Transverse colon (tissue), 4 donors: ENCODE measurements at regions of chr18 and their contacts with region 1.

Region 1: DNA sequence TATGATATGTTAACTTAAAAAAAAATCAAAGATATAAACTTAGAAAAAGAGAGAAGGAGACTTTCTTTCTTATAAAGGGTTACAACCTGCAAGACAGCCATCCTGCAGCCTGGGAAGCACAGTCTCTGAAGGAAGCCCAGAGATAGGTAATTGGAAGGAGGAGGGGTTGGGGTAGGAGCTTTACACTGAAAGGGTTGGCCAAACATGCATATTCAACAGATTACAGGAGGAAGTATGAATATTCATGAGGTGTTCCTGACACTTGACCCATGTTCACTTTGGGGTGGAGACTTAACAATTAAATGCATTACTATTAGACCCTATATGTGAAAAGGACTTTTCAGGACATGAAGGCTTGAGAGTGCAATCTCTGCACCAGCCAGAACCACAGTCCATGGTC is 71.7 kb upstream of the CDH2 start:
- DNase-seq: no peak
- H3K4me3 ChIP-seq: no peak overlapping the region
- H3K27ac ChIP-seq: no peak overlapping the region
- H3K4me1 ChIP-seq: no peaks in the 10 kb centered on the region
- H3K27me3 ChIP-seq: no peaks in the 10 kb centered on the region
- CTCF ChIP-seq: no peak
- EP300 ChIP-seq: no peak
- POLR2A ChIP-seq: no peak

Region 2: DNA sequence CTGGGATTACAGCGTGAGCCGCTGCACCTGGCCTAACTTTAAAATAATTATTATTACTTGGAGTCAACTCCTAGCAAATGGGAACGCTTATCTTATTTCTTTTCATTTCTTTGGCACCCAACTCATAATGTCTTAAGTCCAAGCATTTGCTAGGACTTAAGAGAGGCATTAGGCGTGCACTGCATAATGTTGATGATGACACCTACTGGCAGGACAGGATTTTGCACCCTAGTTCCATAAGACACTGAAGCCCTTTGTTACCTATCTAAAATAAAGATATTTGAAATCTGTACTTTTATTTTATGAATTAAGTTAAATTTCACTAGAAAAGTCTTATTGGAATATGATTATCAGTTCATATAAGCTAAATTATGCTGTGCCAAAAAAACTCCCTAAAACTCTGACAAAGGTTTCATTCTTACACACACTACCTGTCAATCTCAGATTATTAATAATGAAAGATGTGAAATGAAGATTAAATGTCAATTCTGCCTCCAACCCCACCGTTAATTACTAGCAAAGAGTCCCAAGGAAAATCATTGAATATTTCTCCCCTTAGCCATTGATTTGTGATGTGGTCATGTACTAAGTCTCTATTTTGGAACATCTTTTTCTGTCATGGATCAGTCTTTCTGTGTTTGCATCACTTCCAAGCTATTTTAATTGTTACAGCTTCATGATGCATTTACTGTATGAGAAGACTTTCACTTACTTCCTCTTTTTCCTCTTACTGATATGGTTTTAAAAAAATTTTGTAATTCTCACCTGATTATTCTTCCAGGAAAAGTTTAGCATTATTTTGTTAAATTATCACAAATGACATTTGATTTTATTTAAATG is 59.0 kb before region 1 on chr18:
- in situ Hi-C with region 1: no loop called
- intact Hi-C with region 1: no loop called
- DNase-seq: no peak
- H3K4me3 ChIP-seq: no peak overlapping the region
- H3K27ac ChIP-seq: no peak overlapping the region
- H3K4me1 ChIP-seq: no peaks in the 10 kb centered on the region
- H3K27me3 ChIP-seq: no peaks in the 10 kb centered on the region
- CTCF ChIP-seq: peak; percentile 16 to 56 (median 41)
- EP300 ChIP-seq: no peak
- POLR2A ChIP-seq: no peak

Region 3: DNA sequence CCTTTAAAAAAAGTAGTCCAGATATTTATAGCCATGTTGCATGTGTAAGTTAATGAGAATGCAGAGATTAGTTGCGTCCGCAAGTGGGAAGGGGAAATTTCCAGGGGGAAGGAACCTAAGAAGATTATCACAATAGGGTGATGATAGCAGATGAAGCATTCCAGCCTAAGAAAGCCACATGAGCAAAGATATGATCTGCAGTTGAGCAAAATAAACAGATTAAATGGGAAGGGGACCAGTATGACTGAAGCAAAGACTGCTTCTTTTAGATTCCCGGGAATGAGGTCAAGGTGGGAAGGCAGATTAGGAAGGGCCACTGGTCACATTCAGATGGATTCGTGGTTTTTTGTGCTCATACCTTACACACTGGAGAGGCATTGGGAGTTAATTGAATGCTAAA is 82.9 kb after region 1 on chr18:
- in situ Hi-C with region 1: loop called in 2 of 4 experiments (anchors 25 kb)
- intact Hi-C with region 1: no loop called
- DNase-seq: no peak
- H3K4me3 ChIP-seq: no peak overlapping the region
- H3K27ac ChIP-seq: no peak overlapping the region
- H3K4me1 ChIP-seq: no peaks in the 10 kb centered on the region
- H3K27me3 ChIP-seq: no peaks in the 10 kb centered on the region
- CTCF ChIP-seq: no peak
- EP300 ChIP-seq: no peak
- POLR2A ChIP-seq: no peak

Region 4: DNA sequence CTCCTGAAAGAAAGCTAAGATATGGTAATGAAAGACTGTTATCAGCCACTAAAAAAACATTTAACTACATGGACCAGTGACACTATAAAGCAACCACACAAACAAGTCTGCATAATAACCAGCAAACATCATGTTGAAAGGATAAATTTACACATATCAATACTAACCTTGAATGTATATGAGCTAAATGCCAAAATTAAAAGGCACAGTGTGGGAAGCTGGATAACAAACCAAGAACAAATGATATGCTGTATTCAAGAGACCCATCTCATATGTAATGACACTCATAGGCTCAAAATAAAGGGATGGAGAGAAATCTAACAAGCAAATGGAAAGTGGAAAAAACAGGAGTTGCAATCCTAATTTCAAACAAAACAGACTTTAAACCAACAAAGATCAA is 141.4 kb after region 1 on chr18:
- in situ Hi-C with region 1: no loop called
- intact Hi-C with region 1: no loop called
- DNase-seq: no peak
- H3K4me3 ChIP-seq: no peak overlapping the region
- H3K27ac ChIP-seq: no peak overlapping the region
- H3K4me1 ChIP-seq: no peaks in the 10 kb centered on the region
- H3K27me3 ChIP-seq: no peaks in the 10 kb centered on the region
- CTCF ChIP-seq: no peak
- EP300 ChIP-seq: no peak
- POLR2A ChIP-seq: no peak